Right ventricle myocardium inferior (tissue), 1 donor: ENCODE measurements at regions of chr14 and their contacts with region 1.

Region 1: DNA sequence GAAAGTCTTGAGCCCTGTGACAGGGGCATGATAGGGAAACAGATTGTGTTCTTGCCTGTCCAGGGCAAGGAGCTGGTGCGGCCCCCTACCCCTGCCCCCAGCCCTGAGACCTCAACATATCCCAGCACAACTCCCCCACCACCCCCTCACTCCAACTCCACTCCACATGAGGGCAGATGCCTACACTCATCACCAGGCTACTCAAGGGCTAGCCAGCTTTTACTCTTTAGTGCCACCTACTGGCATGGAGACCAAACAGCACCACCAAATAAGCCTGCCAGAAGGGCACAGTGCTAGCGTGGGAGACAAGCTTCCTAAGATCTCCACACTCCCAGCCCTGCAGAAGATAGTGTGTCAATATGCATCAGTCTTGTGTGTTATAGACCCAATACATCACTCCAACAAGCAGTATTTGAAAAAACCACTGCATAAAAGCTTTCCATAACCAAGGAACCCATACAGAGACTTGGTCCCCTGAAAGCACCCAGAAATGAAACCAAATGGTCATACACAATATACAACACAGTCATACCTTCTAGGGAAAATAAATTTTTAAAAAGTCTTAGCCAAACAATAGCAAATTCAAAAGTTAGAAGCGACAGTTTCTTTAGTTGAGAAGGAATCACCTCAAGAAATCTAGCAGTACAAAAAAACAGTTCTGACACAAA is 154.4 kb downstream of the KCNK10 start:
- DNase-seq: no peak
- ATAC-seq: peak; percentile 46

Region 2: DNA sequence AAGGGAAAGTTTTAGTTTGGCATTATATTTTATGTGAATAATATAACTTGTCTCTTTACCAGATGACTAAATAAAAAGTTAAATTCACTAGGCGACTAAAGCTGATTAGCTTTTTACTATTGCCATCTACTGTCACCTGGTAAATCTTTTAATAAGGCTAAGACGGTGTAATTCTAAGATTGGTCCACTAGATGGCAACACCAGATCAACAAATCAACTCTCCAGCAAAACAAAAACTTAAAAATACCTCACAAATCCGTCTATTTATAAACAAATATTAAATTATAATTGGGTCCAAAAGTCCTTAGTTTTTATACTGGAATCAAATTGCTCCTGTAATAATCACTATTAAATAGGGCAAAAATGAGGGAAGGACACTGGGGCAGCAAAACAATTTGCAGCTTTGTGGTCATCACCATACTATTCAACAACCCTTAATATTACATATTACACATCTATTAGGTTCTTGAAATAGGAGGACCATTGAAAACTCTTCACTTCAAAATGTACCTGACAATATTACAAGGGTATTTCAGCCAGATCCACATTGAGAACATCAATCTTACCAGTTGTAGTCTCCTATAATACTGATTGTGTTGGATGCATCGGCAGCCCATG is 223.5 kb before region 1 on chr14:
- intact Hi-C with region 1: loop called (anchors 5 kb)
- DNase-seq: no peak
- ATAC-seq: no peak

Region 3: DNA sequence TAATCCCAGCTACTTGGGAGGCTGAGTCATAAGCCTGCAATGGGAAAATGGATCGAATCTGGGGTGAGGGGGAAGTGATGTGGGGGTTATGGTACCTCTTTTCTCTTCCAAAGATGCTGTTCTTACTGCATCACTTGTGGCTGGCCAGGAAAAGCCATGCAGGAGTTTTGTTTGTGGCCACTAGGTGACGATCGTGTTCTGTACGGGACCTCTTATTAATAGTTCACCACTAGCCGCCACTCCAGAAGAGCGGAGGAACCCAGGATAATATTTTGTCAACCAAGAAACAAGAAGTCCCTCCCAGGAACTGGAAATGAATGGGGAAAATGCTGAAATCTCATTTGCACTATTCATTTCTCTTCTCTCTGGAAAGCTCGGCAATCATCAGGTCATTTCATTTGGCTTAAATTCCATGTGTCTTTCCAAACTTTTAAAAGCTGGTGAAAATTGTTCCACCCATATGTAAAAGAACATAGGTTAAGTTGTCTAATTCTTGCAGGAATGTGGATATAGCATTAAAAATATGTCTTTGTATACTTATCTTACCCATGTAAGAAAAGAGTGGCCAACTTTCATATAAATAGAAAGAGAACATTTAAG is 154.8 kb before region 1 on chr14:
- intact Hi-C with region 1: loop called (anchors 2 kb)
- DNase-seq: no peak
- ATAC-seq: peak; percentile 88

Region 4: GRCh38 chr14:88312257-88312656 is 143.6 kb after region 1 on chr14:
- intact Hi-C with region 1: no loop called
- DNase-seq: no peak
- ATAC-seq: no peak